SK-N-SH (cell line): ENCODE measurements at regions of chr2 and their contacts with region 1.

Region 1: DNA sequence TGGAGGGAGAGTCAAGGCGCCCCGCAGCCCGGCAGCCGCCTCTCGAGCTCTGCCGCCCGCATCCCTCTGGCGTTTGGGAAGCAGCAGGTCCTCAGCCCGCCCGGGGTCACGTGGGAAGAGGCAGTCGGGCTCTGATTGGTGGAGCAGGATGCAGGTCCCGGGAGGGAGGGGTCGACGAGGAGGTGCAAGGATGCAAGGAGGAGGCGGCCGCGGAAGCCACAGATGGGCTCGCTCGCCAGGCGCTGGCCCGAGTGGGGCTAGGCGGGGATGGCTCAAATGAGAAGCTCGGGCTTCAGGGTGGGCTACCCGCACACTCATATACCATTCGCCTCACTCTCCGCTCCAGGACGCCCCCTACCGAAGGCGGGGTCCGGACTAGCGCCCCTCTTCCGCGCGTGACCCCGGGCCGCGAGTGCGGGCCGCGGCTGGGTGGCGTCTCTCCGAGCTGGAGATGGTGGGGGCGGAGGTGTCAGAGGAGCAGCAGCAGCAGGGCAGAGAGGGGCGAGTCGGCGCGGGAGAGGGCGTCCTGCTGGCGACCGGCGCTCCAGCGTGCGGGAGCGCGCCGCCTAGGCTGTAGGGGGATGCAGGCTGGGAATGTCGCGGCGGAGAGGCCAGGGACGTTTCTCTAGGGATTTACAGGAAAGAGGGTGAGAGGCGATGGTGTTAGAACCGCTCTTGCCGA is at the start of gene TMEFF2:
- DNase-seq: peak; percentile 98
- H3K4me3 ChIP-seq: peak within 1 kb of the TSS; percentile 57 to 83
- H3K27ac ChIP-seq: peak within 1 kb of the TSS in 1 of 2 experiments; percentile 65; a peak in 2 of 4 replicates
- H3K4me1 ChIP-seq: peaks cover 0 to 25% of the 10 kb centered on the region in 2 experiments; a peak in 2 of 4 replicates
- H3K27me3 ChIP-seq: no peaks in the 10 kb centered on the region; the same call in 1 of the 2 replicates
- CTCF ChIP-seq: peak; percentile 62
- EP300 ChIP-seq: no peak; a peak in 1 of 4 replicates
- RAD21 ChIP-seq: no peak; the same call in 1 of the 2 replicates
- polyA plus RNA-seq, gene TMEFF2: 5.4 and 5.8 TPM in 2 replicates

Region 2: DNA sequence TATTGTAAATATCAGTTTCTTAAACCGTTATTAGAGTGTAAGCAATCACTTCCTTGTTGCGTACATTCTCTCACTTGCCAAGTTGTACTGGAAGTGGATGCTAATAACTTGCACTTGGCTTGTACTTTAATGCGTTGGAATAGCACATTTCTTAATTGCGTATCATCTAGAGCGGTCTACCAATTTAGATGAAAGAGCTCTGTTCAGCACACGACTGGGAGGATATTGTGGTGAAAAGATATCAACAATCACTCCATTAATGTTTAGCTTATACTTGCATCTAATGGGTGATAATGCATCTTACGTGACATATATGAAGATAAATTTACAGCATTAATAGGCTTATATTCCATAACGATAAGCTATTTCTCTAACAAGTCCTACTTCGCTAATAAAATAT is 11.4 kb after region 1 on chr2:
- CTCF ChIA-PET with region 1: interaction called, 11 read pairs
- POLR2A ChIA-PET with region 1: no interaction called
- DNase-seq: no peak
- H3K4me3 ChIP-seq: no peak overlapping the region
- H3K27ac ChIP-seq: no peak overlapping the region
- H3K4me1 ChIP-seq: no peaks in the 10 kb centered on the region
- H3K27me3 ChIP-seq: no peaks in the 10 kb centered on the region
- CTCF ChIP-seq: no peak
- EP300 ChIP-seq: no peak
- RAD21 ChIP-seq: no peak

Region 3: DNA sequence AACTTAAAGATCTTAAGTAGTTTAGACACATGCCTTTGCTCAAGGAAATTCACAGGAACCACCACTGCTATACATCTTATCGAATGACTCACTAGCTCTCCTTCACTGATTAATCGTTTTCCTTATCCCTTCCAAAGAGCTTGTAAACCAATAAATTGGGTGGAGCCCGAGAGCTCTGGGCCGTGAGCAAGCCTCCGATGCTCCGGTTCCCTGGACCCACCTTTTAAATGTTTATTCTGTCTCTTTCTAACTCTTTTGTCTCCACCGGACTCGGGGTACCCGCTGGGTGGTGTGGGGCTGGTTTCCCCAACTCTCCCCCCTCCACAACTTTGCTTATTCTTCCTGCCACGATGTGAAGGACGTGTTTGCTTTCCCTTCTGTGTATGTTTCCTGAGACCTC is 292.6 kb after region 1 on chr2:
- CTCF ChIA-PET with region 1: no interaction called
- POLR2A ChIA-PET with region 1: no interaction called
- DNase-seq: no peak
- H3K4me3 ChIP-seq: no peak overlapping the region
- H3K27ac ChIP-seq: no peak overlapping the region
- H3K4me1 ChIP-seq: no peaks in the 10 kb centered on the region
- H3K27me3 ChIP-seq: no peaks in the 10 kb centered on the region
- CTCF ChIP-seq: no peak
- EP300 ChIP-seq: no peak
- RAD21 ChIP-seq: no peak

Region 4: DNA sequence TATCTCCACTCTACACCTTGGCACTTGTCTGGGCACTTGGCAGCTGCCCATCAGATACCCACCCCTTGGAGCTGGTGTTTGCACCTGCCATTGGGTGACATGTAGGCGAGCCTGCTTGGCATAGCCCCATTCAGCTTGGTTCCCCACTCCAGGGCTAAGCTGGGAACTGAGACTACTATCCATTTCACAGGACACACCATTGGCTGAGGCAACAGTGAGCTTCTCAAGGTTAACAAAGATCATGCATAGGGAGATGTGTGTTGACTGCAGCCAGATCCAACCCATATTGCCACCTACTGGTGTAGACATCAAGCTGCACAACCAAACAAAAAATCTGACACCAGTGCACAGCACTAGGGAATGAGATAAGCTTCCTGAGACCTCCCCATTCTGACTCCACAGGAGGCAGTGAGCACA is 1389.5 kb after region 1 on chr2:
- CTCF ChIA-PET with region 1: interaction called, 15 read pairs
- POLR2A ChIA-PET with region 1: no interaction called
- DNase-seq: peak; percentile 27
- H3K4me3 ChIP-seq: no peak overlapping the region; a peak in 1 of 4 replicates
- H3K27ac ChIP-seq: no peak overlapping the region
- H3K4me1 ChIP-seq: no peaks in the 10 kb centered on the region; a peak in 1 of 4 replicates
- H3K27me3 ChIP-seq: no peaks in the 10 kb centered on the region
- CTCF ChIP-seq: peak; percentile 50
- EP300 ChIP-seq: no peak
- RAD21 ChIP-seq: peak; percentile 69